ENCODE measurements at regions of chr14 and their contacts with region 1.

Region 1: GRCh38 chr14:50173891-50174290 is 57.5 kb downstream of the SOS2 start:
- DNase-seq: no peak
- H3K4me3 ChIP-seq: no peak overlapping the region
- H3K27me3 ChIP-seq: no peaks in the 10 kb centered on the region
- CTCF ChIP-seq: no peak

Region 2: DNA sequence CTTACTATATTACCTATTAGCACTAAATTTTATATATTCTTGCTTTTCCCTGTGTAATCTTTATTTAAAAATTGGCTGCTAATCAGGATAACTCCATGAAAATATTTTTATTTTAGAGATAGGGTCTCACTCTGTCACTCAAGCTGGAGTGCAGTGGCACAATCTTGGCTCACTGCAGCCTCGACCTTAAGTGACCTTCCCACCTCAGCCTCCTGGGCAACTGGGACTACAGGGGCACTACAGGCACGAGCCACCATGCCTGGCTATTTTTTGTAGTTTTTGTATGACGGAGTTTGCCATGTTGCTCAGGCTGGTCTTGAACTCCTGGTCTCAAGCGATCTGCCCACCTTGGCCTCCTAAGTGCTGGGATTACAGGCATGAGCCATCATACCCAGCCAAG is 25.1 kb before region 1 on chr14:
- CTCF ChIA-PET with region 1: no interaction called
- POLR2A ChIA-PET with region 1: no interaction called
- DNase-seq: no peak
- H3K4me3 ChIP-seq: no peak overlapping the region
- H3K27me3 ChIP-seq: no peaks in the 10 kb centered on the region
- CTCF ChIP-seq: no peak

Region 3: DNA sequence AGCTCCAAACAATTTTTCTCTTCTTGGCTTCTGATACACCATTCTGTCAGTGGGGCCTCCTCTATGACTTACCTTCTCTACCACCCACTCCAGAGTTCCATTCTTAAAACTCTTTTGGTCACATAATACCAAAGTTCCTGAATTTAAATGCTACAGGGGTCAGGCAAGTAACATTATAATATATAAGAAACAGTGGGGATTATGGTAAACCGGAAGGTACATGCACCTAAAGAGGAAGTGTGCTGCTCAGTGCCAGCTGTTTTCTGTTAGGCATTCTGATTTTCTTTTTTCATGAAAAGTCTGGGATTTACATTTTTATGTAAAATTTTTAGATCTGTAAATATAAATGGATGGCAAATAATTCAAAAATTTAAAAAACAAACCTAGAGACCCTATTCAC is 17.6 kb after region 1 on chr14:
- CTCF ChIA-PET with region 1: no interaction called
- POLR2A ChIA-PET with region 1: no interaction called
- DNase-seq: no peak
- H3K4me3 ChIP-seq: no peak overlapping the region
- H3K27me3 ChIP-seq: no peaks in the 10 kb centered on the region
- CTCF ChIP-seq: no peak

Region 4: GRCh38 chr14:50210074-50210473 is 36.2 kb after region 1 on chr14:
- CTCF ChIA-PET with region 1: no interaction called
- POLR2A ChIA-PET with region 1: interaction called, 11 read pairs
- DNase-seq: no peak
- H3K4me3 ChIP-seq: no peak overlapping the region
- H3K27me3 ChIP-seq: no peaks in the 10 kb centered on the region
- CTCF ChIP-seq: no peak

Region 5: DNA sequence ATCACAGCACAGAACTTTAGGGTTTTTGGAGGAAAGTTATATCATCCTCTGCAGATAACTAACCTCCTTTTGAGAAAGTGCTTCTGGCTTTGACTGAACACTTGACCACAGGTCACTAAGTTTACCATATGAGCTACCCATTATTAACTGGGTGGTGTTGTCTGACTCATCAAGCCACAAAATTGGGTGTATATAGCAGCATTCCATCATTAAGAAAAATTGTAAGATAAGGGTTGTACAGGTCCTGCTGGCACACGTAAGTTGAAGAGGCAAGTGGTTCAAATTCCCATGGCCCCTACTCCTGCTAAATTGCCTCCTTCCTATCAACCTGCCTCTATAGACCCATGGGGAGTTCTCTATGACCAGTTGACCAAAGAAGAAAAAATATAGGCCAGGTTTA is 98.6 kb after region 1 on chr14:
- CTCF ChIA-PET with region 1: no interaction called
- POLR2A ChIA-PET with region 1: no interaction called
- DNase-seq: no peak
- H3K4me3 ChIP-seq: no peak overlapping the region
- H3K27me3 ChIP-seq: no peaks in the 10 kb centered on the region
- CTCF ChIP-seq: no peak

Measured in BJ (cell line).